ENCODE measurements at regions of chr2 and their contacts with region 1.

Region 1: DNA sequence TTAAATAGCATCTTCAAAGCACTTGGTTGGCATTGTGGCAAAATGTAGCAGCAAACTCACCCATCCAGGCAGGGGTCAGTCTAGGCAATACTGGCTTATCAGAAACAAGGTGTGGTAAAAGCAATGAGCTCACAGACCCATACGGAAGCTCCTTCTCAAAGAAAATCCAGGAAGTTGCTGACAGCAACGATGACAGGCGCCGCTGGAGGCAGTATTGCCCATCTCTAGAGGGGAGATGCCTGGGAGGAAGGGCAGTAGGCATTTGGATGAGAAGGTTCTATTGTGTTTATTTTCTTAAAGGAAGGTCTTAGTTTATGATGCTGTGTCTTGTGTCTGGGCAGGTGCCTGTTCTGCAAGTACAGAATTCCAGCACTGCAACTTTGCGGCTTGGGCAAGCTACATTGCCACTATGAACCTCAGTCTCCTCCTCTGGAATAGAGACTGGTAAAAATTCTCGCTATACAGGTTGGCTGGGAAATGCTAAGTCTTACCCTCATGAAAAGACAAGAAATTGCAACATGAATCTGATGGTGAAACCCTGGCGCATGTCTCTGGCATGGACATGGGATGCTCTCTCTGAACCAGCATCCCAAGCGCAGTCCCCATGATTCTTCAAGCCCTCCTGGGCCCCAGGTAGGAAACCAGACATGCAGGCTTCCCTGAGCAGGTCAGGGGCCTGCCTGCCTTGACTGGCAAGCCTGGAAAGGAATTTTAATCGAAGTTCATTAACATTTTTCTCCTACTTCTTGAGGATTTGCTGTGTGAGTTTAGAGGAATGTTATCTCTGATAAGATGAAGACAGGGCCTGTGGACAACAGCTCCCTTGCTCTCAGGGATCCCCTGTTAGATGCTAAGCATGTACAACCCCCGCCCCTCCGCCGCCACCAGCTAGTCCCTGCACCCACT is 156.0 kb downstream of the TFCP2L1 start:
- DNase-seq: peak; percentile 74 to 75
- H3K4me3 ChIP-seq: no peak overlapping the region
- H3K4me3 Mint-ChIP-seq: no peak overlapping the region
- H3K27ac Mint-ChIP-seq: no peak overlapping the region
- H3K4me1 ChIP-seq: peaks cover 5% of the 10 kb centered on the region; the same call in 1 of the 2 replicates
- H3K4me1 Mint-ChIP-seq: peaks cover under 1% of the 10 kb centered on the region
- H3K27me3 ChIP-seq: no peaks in the 10 kb centered on the region; the same call in 1 of the 2 replicates
- H3K27me3 Mint-ChIP-seq: peaks cover 6% of the 10 kb centered on the region
- CTCF ChIP-seq: peak; percentile 65 to 90

Region 2: GRCh38 chr2:121095257-121096080 is 33.5 kb before region 1 on chr2:
- CTCF ChIA-PET with region 1: interaction called, 11 read pairs
- POLR2A ChIA-PET with region 1: no interaction called
- intact Hi-C with region 1: loop called (anchors 2 kb)
- DNase-seq: peak; percentile 57 to 75
- H3K4me3 ChIP-seq: no peak overlapping the region
- H3K4me3 Mint-ChIP-seq: no peak overlapping the region
- H3K27ac Mint-ChIP-seq: no peak overlapping the region
- H3K4me1 ChIP-seq: peaks cover 5% of the 10 kb centered on the region; the same call in 1 of the 2 replicates
- H3K4me1 Mint-ChIP-seq: peaks cover 7% of the 10 kb centered on the region
- H3K27me3 ChIP-seq: no peaks in the 10 kb centered on the region
- H3K27me3 Mint-ChIP-seq: no peaks in the 10 kb centered on the region
- CTCF ChIP-seq: peak; percentile 55 to 74

Region 3: DNA sequence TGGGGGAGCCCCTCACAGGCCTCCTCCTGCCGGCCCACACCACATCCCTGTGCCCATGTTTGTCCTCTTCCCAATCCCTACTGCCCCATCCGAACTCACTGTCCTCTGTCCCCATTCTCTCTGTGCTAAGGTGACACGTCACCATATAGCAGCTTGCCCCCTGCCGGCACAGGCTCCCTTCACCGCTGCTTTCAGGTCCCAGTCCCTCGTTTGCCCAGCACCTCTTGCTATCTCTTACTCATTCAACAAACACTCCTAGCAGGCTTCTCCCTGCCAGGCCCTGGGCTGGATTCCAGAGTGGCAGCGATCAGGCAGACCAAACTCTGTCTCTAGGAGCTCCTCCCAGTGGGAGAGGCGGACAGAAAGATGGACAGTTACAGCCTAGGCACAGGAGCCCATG is 81.7 kb after region 1 on chr2:
- CTCF ChIA-PET with region 1: interaction called, 25 read pairs
- POLR2A ChIA-PET with region 1: no interaction called
- intact Hi-C with region 1: loop called (anchors 5 kb)
- DNase-seq: peak; percentile 70 to 72
- H3K4me3 ChIP-seq: no peak overlapping the region
- H3K4me3 Mint-ChIP-seq: peak overlapping the region; percentile 42
- H3K27ac Mint-ChIP-seq: peak overlapping the region; percentile 51
- H3K4me1 ChIP-seq: peaks cover 40% of the 10 kb centered on the region
- H3K4me1 Mint-ChIP-seq: peaks cover 29% of the 10 kb centered on the region
- H3K27me3 ChIP-seq: no peaks in the 10 kb centered on the region
- H3K27me3 Mint-ChIP-seq: no peaks in the 10 kb centered on the region
- CTCF ChIP-seq: peak; percentile 21 to 37

Region 4: GRCh38 chr2:121319953-121320352 is 190.9 kb after region 1 on chr2:
- CTCF ChIA-PET with region 1: interaction called, 9 read pairs
- POLR2A ChIA-PET with region 1: no interaction called
- intact Hi-C with region 1: loop called (anchors 1 kb)
- DNase-seq: peak; percentile 46 to 52
- H3K4me3 ChIP-seq: no peak overlapping the region
- H3K4me3 Mint-ChIP-seq: no peak overlapping the region
- H3K27ac Mint-ChIP-seq: peak overlapping the region; percentile 20
- H3K4me1 ChIP-seq: peaks cover 13% of the 10 kb centered on the region
- H3K4me1 Mint-ChIP-seq: peaks cover 16% of the 10 kb centered on the region
- H3K27me3 ChIP-seq: no peaks in the 10 kb centered on the region
- H3K27me3 Mint-ChIP-seq: no peaks in the 10 kb centered on the region
- CTCF ChIP-seq: no peak

Region 5: DNA sequence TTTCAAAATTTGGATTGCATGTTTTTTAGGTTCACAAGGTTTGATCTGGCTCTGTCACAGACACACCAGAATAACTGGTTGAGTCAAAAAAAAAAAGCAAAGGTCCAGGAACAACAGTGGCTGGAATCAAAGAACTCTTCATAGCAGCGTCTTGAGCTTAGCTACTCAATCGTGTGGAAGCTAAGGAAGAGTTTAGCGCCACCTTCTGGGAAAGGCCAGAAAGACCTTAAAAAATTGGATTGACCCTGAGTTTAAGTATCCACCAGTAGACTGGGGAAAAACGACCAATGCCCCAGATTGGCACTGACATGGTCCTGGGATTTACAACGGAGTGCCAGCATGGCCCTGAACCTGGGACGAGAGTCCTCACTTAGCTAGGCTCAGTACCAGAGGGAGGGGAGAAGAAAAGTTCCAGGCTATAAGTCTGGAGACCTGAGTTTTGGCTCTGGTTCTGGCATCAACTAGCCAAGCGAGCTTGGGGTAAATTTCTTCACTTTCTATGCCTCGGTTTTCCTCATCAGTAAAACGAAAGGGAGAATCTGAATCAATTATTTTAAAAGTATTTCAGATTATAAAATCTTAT is 227.1 kb after region 1 on chr2:
- CTCF ChIA-PET with region 1: interaction called, 109 read pairs
- POLR2A ChIA-PET with region 1: no interaction called
- intact Hi-C with region 1: loop called (anchors 1 kb)
- DNase-seq: peak; percentile 59 to 72
- H3K4me3 ChIP-seq: no peak overlapping the region
- H3K4me3 Mint-ChIP-seq: no peak overlapping the region
- H3K27ac Mint-ChIP-seq: no peak overlapping the region
- H3K4me1 ChIP-seq: 0 out of 2 replicates have a peak, but pooled peaks cover 6% of the 10 kb centered on the region
- H3K4me1 Mint-ChIP-seq: peaks cover 17% of the 10 kb centered on the region
- H3K27me3 ChIP-seq: no peaks in the 10 kb centered on the region
- H3K27me3 Mint-ChIP-seq: no peaks in the 10 kb centered on the region
- CTCF ChIP-seq: peak; percentile 66 to 77